Mammary epithelial cell (primary cell): ENCODE measurements at regions of chr14 and their contacts with region 1.

Region 1: DNA sequence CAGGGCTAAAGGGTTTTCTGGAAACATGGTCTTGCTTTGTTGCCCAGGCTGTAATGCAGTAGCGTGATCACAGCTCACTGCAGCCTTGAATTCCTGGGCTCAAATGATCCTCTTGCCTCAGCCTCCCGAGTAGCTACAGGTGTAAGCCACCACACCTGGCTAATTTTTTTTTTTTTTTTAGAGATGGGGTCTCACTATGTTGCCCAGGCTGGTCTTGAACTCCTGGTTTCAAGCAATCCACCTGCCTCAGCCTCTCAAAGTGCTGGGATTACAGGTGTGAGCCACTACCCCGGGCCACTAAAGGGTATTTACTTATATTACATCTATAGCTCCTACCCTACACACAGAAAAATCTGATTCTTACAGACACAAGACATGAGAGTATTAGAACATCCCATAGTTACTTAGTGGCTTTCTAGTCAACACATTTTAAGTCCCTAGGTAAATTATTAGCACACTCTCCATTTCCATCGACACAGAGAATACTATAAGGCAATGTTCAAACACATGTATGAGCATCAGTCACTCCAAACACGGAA is 6.2 kb upstream of the DCAF11 start:
- DNase-seq: no peak
- H3K4me3 ChIP-seq: no peak overlapping the region
- H3K27ac ChIP-seq: no peak overlapping the region
- H3K4me1 ChIP-seq: peaks cover 21% of the 10 kb centered on the region
- H3K27me3 ChIP-seq: no peaks in the 10 kb centered on the region
- CTCF ChIP-seq: no peak

Region 2: DNA sequence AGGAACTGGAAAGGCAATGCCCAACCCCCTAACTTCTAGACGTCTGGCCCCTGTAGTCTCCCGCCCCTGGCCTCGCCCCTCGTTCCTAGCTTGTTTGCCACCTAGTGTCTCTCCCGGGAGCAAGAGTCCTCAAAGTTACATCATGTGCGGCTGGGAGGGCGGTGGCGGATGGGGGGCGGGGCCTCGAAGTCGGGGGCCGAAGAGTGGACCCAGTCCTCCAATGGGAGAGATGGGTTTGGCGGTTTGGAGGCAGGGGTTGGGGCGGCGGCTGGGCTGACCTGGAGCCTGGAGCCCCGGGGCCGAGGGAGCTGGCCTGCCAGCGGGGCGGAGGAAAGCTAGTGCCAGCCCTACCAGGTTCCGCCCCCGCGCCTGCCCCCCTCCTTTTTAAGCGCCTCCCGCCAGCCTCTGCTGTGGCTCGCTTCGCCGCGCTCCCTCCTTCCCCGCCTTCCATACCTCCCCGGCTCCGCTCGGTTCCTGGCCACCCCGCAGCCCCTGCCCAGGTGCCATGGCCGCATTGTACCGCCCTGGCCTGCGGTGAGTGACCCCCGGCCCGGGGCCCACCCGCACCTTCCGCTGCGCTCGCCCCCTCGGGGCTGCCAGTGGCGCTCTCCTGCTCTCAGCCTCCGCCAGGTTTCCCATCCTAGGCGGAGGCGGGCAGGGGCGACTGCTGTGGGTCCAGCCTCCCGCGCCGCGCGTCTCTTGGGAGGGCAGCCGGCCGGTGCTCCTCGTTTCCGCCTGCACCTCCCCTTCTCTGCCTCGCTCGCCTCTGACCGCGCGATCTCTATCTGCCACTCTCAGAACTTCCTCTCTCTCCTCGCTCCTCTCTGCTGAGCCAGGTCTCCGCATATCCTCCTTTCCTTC is 14.3 kb before region 1 on chr14 and contains the start of gene PCK2:
- CTCF ChIA-PET with region 1: interaction called, 18 read pairs
- dilution Hi-C with region 1: no loop called
- in situ Hi-C with region 1: no loop called
- intact Hi-C with region 1: loop called (anchors 1 kb)
- DNase-seq: peak; percentile 88
- H3K4me3 ChIP-seq: peak within 1 kb of the TSS; percentile 67 to 86 (median 77)
- H3K27ac ChIP-seq: peak within 1 kb of the TSS; percentile 54
- H3K4me1 ChIP-seq: peaks cover 12% of the 10 kb centered on the region
- H3K27me3 ChIP-seq: no peaks in the 10 kb centered on the region
- CTCF ChIP-seq: peak in 1 of 2 donors; percentile 6
- total RNA-seq, gene PCK2: 55.5 to 129 TPM

Region 3: DNA sequence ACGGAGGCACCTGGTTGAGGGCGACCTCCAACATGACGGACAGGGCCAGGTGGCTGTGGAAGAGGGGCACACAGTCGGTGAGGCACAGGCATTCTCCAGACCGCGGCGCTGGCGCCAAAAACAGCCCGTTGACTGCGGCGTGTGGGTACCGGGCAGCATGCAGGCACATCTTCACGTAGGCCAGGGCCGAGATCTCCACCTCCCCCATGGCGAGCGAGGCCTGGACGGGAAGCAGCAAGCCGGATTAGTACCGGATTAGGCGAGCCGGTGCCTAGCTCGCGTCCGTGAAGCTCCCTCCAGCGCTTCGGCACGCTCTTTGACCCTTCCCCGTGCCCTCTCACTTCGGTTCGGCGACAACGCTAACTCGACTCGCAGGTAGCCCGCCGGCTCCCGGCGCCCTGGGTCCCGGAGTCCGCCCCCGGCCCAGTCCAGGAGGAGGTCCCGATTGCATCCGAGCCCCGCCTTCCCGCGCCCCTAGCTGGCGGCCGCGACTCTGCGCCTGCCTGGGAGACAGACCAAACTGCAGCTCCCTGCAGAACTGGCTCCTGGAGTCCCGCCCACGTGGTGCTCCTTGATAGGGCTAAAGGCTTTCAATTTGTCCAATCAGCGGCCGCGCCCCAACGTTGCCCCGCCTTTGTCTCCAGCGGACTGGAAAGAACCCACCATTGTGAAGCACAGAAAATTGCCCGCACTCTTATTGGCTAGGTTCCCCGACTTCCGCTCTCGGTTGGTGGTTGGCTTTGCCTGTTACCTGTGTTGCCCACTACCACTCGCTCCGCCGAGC is 32.9 kb after region 1 on chr14 and contains the start of gene EMC9:
- CTCF ChIA-PET with region 1: interaction called, 17 read pairs
- dilution Hi-C with region 1: no loop called
- in situ Hi-C with region 1: no loop called
- intact Hi-C with region 1: no loop called
- DNase-seq: peak; percentile 99
- H3K4me3 ChIP-seq: peak within 1 kb of the TSS; percentile 65 to 92 (median 70)
- H3K27ac ChIP-seq: peak within 1 kb of the TSS; percentile 56
- H3K4me1 ChIP-seq: peaks cover 28% of the 10 kb centered on the region
- H3K27me3 ChIP-seq: no peaks in the 10 kb centered on the region
- CTCF ChIP-seq: peak; percentile 15 to 46
- total RNA-seq, gene EMC9: 9.0 to 20.5 TPM

Region 4: DNA sequence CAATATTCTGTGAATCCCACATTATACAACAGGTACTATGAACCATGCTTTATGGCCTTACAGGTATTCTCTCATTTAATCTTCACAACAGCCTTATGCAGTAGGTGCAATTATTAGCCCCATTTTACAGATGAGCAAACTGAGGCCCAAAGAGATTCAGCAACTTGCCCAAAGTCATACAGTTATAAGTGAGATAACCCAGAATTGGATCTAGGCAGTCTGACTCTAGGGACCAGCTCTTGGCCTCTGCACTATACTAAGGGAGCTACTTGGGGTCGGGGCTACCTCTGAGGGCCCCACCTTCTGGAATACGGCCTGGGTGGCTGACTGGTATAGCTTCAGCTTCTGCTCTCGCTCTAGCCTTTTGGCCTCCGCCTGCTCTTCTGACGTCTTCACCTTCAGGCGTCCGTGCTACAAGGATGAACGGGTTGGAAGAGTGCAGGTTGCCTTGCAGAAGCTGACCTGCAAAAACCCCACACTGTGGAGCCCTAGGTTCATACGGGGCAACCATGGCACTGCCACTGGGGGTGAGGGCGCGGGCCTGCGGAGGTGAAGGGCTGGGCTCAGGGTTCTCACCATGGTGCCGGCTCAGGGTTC is 162.2 kb after region 1 on chr14:
- CTCF ChIA-PET with region 1: no interaction called
- dilution Hi-C with region 1: no loop called
- in situ Hi-C with region 1: no loop called
- intact Hi-C with region 1: no loop called
- DNase-seq: no peak
- H3K4me3 ChIP-seq: peak overlapping the region; percentile 64 to 90 (median 70)
- H3K27ac ChIP-seq: peak overlapping the region; percentile 84
- H3K4me1 ChIP-seq: peaks cover 29% of the 10 kb centered on the region
- H3K27me3 ChIP-seq: no peaks in the 10 kb centered on the region
- CTCF ChIP-seq: no peak